ENCODE measurements at regions of chr9 and their contacts with region 1.

Region 1: GRCh38 chr9:33340186-33340585 is 49.9 kb downstream of the NFX1 start:
- DNase-seq: no peak
- ATAC-seq: no peak
- H3K4me3 ChIP-seq: no peak overlapping the region
- H3K27ac ChIP-seq: no peak overlapping the region
- H3K4me1 ChIP-seq: no peaks in the 10 kb centered on the region
- H3K27me3 ChIP-seq: no peaks in the 10 kb centered on the region

Region 2: DNA sequence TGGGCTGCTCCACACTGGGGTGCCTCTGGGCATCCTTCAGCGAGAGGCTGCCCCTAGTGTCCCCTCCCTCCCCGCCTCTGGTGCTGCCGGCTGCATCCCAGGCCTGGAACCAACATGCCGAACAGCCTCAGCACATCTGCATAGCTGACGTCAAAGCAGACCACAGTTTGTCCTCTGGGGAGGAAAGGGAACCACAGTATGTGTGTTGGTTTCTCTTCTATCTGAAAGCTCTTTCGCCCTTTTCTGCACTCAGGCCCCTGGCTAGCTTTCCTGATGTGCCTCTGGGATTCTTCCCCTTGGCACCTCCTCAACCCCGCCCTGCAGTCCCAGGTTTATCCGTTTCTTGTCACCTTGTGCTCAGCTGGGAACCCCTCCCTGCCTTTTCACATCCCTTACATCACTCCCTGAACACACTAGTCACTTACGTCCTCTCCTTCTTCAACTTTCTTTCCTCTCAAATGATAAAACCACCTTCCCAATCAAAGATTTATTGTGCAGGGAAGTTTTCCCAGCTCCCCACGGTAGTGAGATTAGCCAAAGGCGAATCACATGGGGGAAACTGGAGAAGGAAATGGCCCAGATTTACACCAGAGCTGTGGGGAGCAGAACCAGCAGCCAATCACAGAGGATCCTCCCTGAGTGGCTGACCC is 137.5 kb before region 1 on chr9:
- intact Hi-C with region 1: no loop called
- DNase-seq: peak in 1 of 2 donors; percentile 72
- ATAC-seq: peak; percentile 33
- H3K4me3 ChIP-seq: no peak overlapping the region
- H3K27ac ChIP-seq: no peak overlapping the region
- H3K4me1 ChIP-seq: no peaks in the 10 kb centered on the region
- H3K27me3 ChIP-seq: no peaks in the 10 kb centered on the region

Region 3: GRCh38 chr9:33306037-33306436 is 34.1 kb before region 1 on chr9:
- intact Hi-C with region 1: loop called in 1 of 2 experiments (anchors 5 kb)
- DNase-seq: no peak
- ATAC-seq: no peak
- H3K4me3 ChIP-seq: no peak overlapping the region
- H3K27ac ChIP-seq: no peak overlapping the region
- H3K4me1 ChIP-seq: no peaks in the 10 kb centered on the region
- H3K27me3 ChIP-seq: no peaks in the 10 kb centered on the region

Region 4: DNA sequence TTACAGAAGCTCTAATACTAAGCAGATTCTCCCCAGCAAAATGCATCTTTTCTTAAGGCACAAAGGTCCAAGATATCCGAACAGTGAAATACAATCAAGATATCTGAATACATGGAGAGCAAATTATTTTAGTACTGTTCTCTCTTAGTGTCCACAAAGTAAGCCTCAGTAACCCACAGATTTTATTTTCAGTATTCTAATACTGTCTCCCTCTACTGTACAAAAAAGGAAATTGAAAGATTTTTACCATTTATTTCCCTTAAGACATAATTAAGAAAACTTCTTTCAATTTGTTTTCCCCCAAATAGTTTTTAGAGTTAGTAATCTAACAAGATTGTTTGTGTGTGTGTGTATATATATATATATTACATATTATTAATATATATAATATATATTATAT is 158.2 kb after region 1 on chr9:
- intact Hi-C with region 1: no loop called
- DNase-seq: no peak
- ATAC-seq: no peak
- H3K4me3 ChIP-seq: no peak overlapping the region
- H3K27ac ChIP-seq: no peak overlapping the region
- H3K4me1 ChIP-seq: no peaks in the 10 kb centered on the region
- H3K27me3 ChIP-seq: no peaks in the 10 kb centered on the region